ENCODE measurements at regions of chr16 and their contacts with region 1.

Region 1: DNA sequence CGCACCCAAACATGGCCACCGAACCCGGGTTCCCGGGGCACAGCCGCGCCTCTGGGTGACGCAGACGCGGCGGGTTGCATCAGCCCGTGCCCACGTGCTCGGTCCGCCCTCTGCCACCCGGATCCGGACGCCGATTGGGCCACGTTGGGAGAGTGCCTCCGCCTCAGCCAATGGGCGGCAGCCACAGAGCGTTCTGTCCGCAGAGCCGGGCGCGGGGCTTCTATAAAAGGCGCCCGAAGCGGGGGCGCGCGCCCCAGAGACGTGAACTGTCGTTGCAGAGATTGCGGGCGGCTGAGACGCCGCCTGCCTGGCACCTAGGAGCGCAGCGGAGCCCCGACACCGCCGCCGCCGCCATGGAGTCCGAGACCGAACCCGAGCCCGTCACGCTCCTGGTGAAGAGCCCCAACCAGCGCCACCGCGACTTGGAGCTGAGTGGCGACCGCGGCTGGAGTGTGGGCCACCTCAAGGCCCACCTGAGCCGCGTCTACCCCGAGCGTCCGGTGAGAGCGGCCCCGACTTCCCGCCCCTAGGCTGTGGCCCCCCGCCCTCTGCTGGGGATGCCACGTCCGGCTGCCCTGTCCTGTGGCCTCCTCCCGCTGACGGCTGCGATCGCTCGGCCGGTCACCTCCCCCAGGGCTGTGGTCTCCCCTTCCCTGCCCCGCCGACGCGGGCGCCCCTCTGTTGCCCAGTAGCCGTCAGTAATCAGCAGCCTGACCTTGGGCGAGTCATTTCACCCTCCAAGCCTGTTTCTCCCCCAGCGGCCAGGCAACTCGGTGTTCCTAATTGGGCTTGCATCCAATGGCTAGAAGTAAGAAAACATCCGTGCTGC is at the start of gene HERPUD1:
- DNase-seq: peak; percentile 99 to 100 (median 100)
- H3K4me3 ChIP-seq: peak within 1 kb of the TSS; percentile 70 to 100 (median 98)
- H3K27ac ChIP-seq: peak within 1 kb of the TSS; percentile 90 to 100 (median 98)
- H3K27me3 ChIP-seq: no peaks in the 10 kb centered on the region
- CTCF ChIP-seq: peak in 36 of 56 donors; percentile 10 to 55 (median 35)
- total RNA-seq, gene HERPUD1: 76.8 to 213 (median 118) TPM

Region 2: GRCh38 chr16:56824331-56824730 is 107.8 kb before region 1 on chr16:
- intact Hi-C with region 1: no loop called
- DNase-seq: peak in 2 of 10 donors; percentile 14 to 40
- H3K4me3 ChIP-seq: no peak overlapping the region
- H3K27ac ChIP-seq: peak overlapping the region in 27 of 59 donors; percentile 0 to 71 (median 30)
- H3K27me3 ChIP-seq: no peaks in the 10 kb centered on the region
- CTCF ChIP-seq: peak in 31 of 56 donors; percentile 10 to 43 (median 27)

Region 3: GRCh38 chr16:56988948-56989945 is 57.1 kb after region 1 on chr16 and contains the start of gene NLRC5:
- intact Hi-C with region 1: loop called in 1 of 2 experiments (anchors 2 kb)
- DNase-seq: peak; percentile 49 to 90 (median 80)
- H3K4me3 ChIP-seq: peak within 1 kb of the TSS; percentile 58 to 99 (median 80)
- H3K27ac ChIP-seq: peak within 1 kb of the TSS in 57 of 59 donors; percentile 7 to 91 (median 69)
- H3K27me3 ChIP-seq: no peaks in the 10 kb centered on the region
- CTCF ChIP-seq: peak in 14 of 56 donors; percentile 8 to 41 (median 20)
- total RNA-seq, gene NLRC5: 6.0 to 50.1 (median 15.6) TPM

Region 4: DNA sequence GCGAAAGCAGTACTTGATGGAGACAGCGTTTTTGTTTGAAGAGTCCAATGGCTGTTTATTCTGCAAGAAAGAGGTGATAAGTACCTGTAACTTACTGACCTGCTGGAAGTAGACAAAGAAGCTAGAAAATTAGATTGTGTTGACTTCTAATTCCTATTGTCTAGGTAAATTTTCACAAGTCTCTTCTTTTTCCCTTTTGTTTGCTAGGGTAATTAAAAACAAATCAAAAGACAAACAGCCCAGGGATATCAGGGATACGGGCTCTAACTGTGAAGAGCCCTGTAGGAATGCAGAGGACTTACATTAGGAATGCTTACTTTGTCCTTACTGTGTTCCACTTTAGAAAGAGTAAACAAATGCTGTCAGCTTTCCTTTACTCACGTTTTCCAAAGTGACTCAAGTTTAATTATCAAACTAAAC is 246.7 kb after region 1 on chr16:
- intact Hi-C with region 1: no loop called
- DNase-seq: no peak
- H3K4me3 ChIP-seq: peak overlapping the region in 2 of 59 donors; percentile 5 to 7
- H3K27ac ChIP-seq: peak overlapping the region in 34 of 59 donors; percentile 1 to 73 (median 46)
- H3K27me3 ChIP-seq: no peaks in the 10 kb centered on the region
- CTCF ChIP-seq: no peak